Sigmoid colon (tissue), 7 donors: ENCODE measurements at regions of chr11 and their contacts with region 1.

Region 1: DNA sequence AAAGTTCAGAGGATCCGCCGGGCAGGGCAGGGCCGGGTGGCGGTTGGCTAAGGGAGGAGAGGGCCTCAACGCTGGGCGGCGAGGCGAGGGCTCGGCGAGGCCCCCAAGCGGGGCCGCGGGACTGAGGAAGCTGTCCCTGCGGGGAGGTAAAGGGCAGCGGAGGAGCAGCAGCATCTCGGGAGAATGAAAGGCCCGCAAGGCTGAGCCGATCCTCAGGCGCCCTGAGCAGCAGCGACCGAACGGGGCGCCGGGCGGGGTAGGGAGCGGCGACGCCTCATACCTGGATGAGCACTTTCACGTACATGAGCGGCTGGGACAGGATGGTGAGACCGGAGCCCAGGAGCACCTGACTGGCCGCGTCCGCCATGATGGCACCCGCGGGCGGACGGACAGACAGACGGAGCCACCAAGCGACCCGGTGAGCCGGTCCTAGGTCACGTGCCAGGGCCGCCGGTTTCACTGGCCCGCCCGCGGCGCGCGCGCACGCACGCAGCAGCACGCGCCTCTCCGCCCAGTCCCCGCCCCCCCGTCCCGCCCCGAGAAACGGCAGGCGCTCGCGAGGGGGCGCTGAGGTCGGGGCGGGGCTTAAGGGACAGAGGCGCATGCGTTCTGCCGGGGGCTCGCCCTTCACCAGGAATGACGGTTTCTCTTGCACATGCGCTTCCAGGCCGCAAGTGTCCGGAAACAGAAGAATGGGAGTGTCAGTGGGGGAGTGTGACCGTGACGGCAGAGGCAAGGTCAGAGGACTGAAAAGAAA is at the start of gene MTCH2:
- DNase-seq: peak; percentile 98
- H3K4me3 ChIP-seq: peak within 1 kb of the TSS; percentile 58 to 93 (median 66)
- H3K27ac ChIP-seq: peak within 1 kb of the TSS; percentile 88 to 99 (median 93)
- H3K4me1 ChIP-seq: peaks cover 0 to 18% (median 13%) of the 10 kb centered on the region in 4 donors
- H3K27me3 ChIP-seq: no peaks in the 10 kb centered on the region
- CTCF ChIP-seq: no peak
- EP300 ChIP-seq: peak in 1 of 4 donors; percentile 20
- POLR2A ChIP-seq: peak; percentile 36 to 37
- total RNA-seq, gene MTCH2: 33.2 to 44.6 (median 34.2) TPM

Region 2: GRCh38 chr11:47426061-47426956 is 216.0 kb before region 1 on chr11 and contains the start of gene PSMC3:
- intact Hi-C with region 1: no loop called
- DNase-seq: peak; percentile 99
- H3K4me3 ChIP-seq: peak within 1 kb of the TSS; percentile 86 to 97 (median 91)
- H3K27ac ChIP-seq: peak within 1 kb of the TSS; percentile 91 to 95 (median 92)
- H3K4me1 ChIP-seq: peaks cover 0 to 23% (median 19%) of the 10 kb centered on the region in 4 donors
- H3K27me3 ChIP-seq: no peaks in the 10 kb centered on the region
- CTCF ChIP-seq: no peak
- EP300 ChIP-seq: no peak
- POLR2A ChIP-seq: peak; percentile 52 to 65
- total RNA-seq, gene PSMC3: 104 to 202 (median 178) TPM

Region 3: DNA sequence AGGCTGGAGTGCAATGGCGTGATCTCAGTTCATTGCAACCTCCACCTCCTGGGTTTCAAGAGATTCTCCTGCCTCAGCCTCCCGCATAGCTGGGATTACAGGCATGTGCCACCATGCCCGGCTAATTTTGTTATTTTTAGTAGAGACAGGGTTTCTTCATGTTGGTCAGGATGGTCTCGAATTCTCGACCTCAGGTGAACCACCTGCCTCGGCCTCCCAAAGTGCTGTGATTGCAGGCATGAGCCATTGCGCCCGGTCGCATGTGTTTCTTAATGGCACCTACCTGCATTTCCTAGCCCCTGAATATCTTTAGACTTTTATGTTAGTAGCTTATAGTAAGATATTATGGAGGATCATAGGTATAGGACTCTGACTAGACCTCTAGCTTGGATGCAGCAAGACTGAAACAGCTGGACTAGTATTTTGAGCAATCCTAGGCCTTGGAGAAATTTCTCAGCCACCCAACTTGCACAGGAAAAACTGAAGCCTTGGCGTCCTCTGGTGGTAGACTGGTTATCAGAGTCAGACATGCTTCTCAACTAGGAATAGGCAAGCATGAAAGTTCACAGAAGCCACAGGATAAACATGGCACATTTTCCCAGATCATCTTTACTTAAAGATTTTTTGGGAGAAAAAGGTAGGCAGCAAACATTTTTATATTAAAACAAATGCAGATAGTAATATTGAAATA is 25.4 kb before region 1 on chr11:
- intact Hi-C with region 1: no loop called
- DNase-seq: peak; percentile 71
- H3K4me3 ChIP-seq: no peak overlapping the region
- H3K27ac ChIP-seq: no peak overlapping the region
- H3K4me1 ChIP-seq: no peaks in the 10 kb centered on the region
- H3K27me3 ChIP-seq: no peaks in the 10 kb centered on the region
- CTCF ChIP-seq: peak; percentile 22 to 47 (median 27)
- EP300 ChIP-seq: no peak
- POLR2A ChIP-seq: no peak

Region 4: DNA sequence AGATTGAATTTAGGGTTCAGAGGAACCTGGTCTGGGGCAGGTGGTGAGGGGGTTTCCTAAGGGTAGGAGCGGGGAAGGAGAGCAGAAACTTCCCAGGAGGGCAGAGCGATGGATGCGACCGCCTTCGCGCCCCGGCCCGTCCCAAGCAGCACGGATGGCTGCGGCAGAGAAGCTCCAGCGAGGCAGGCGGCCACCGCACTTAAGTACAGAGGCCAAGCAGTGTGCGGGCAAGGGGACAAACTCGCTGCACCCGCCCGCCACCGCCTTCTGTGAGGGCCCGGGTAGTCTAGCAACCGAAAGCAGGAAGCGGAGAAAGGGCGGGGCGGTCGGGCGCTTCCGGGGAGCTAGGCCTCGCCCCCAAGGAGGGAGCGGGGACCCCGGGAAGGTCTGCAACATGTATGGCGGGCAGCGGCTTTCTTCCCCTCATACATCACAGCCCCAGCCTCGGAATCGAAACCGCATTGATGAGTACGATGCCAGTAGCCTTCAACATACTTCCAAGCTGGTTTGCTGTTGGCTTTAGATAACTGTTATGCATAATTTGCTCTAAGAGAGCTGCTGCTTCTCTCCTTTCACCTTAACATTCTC is 72.9 kb after region 1 on chr11 and contains the start of gene AGBL2:
- intact Hi-C with region 1: loop called (anchors 2 kb)
- DNase-seq: peak; percentile 86
- H3K4me3 ChIP-seq: peak within 1 kb of the TSS; percentile 68 to 84 (median 80)
- H3K27ac ChIP-seq: peak within 1 kb of the TSS; percentile 76 to 79 (median 78)
- H3K4me1 ChIP-seq: peaks cover 0 to 5% (median 3%) of the 10 kb centered on the region in 4 donors
- H3K27me3 ChIP-seq: no peaks in the 10 kb centered on the region
- CTCF ChIP-seq: no peak
- EP300 ChIP-seq: no peak
- POLR2A ChIP-seq: peak; percentile 8 to 34
- total RNA-seq, gene AGBL2: 0.33 to 1.1 TPM in 2 of 4 donors, not detected in the others

Region 5: GRCh38 chr11:47766305-47767227 is 124.3 kb after region 1 on chr11:
- intact Hi-C with region 1: loop called (anchors 1 kb)
- DNase-seq: peak; percentile 87
- H3K4me3 ChIP-seq: peak overlapping the region; percentile 54 to 97 (median 86)
- H3K27ac ChIP-seq: peak overlapping the region; percentile 98 to 100 (median 99)
- H3K4me1 ChIP-seq: peaks cover 0 to 33% (median 27%) of the 10 kb centered on the region in 4 donors
- H3K27me3 ChIP-seq: no peaks in the 10 kb centered on the region
- CTCF ChIP-seq: no peak
- EP300 ChIP-seq: no peak
- POLR2A ChIP-seq: no peak

Region 6: GRCh38 chr11:47847892-47848635 is 205.8 kb after region 1 on chr11 and contains the start of gene NUP160:
- intact Hi-C with region 1: loop called (anchors 5 kb)
- DNase-seq: peak; percentile 90
- H3K4me3 ChIP-seq: peak within 1 kb of the TSS; percentile 68 to 93 (median 82)
- H3K27ac ChIP-seq: peak within 1 kb of the TSS; percentile 82 to 95 (median 90)
- H3K4me1 ChIP-seq: peaks cover 0 to 29% (median 14%) of the 10 kb centered on the region in 4 donors
- H3K27me3 ChIP-seq: no peaks in the 10 kb centered on the region
- CTCF ChIP-seq: no peak
- EP300 ChIP-seq: no peak
- POLR2A ChIP-seq: peak; percentile 45 to 66
- total RNA-seq, gene NUP160: 15.7 to 23.2 (median 20.8) TPM